Activated B cell treated with CpG ODN at 0.5 μM for 24 hours (primary cell): ENCODE measurements at regions of chr4 and their contacts with region 1.

Region 1: GRCh38 chr4:102843273-102843672 is 15.9 kb upstream of the UBE2D3 start:
- DNase-seq: no peak
- ATAC-seq: no peak
- H3K4me3 Mint-ChIP-seq: no peak overlapping the region
- H3K27ac Mint-ChIP-seq: no peak overlapping the region
- H3K4me1 Mint-ChIP-seq: peaks cover 2% of the 10 kb centered on the region
- H3K27me3 Mint-ChIP-seq: no peaks in the 10 kb centered on the region
- CTCF ChIP-seq: no peak

Region 2: DNA sequence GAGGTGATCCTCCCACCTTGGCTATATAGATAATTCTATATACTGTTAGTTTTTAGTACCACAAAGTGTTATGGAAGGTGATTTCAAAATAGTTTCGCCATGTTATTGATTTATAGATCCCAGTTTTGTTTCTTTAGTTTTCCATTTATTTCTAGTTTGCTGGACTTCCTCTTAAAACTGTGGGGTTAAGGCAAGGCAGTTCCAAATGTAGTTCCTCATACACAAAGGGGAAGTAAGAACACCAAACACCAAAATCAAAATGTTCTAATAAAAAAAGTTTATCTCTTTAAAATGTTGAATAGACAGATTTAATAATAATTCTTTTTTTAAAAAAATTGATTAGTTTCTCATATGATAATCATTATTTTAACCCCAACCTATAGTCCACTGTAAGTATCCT is 18.7 kb after region 1 on chr4:
- CTCF ChIA-PET with region 1: interaction called, 3 read pairs
- POLR2A ChIA-PET with region 1: interaction called, 9 read pairs
- intact Hi-C with region 1: loop called (anchors 2 kb)
- DNase-seq: no peak
- ATAC-seq: no peak
- H3K4me3 Mint-ChIP-seq: no peak overlapping the region
- H3K27ac Mint-ChIP-seq: no peak overlapping the region
- H3K4me1 Mint-ChIP-seq: peaks cover 25% of the 10 kb centered on the region
- H3K27me3 Mint-ChIP-seq: no peaks in the 10 kb centered on the region
- CTCF ChIP-seq: no peak

Region 3: GRCh38 chr4:102901804-102902203 is 58.5 kb after region 1 on chr4:
- CTCF ChIA-PET with region 1: no interaction called
- POLR2A ChIA-PET with region 1: no interaction called
- intact Hi-C with region 1: no loop called
- DNase-seq: no peak
- ATAC-seq: no peak
- H3K4me3 Mint-ChIP-seq: no peak overlapping the region
- H3K27ac Mint-ChIP-seq: no peak overlapping the region
- H3K4me1 Mint-ChIP-seq: no peaks in the 10 kb centered on the region
- H3K27me3 Mint-ChIP-seq: no peaks in the 10 kb centered on the region
- CTCF ChIP-seq: no peak

Region 4: GRCh38 chr4:102935716-102936115 is 92.4 kb after region 1 on chr4:
- CTCF ChIA-PET with region 1: no interaction called
- POLR2A ChIA-PET with region 1: no interaction called
- intact Hi-C with region 1: no loop called
- DNase-seq: no peak
- ATAC-seq: no peak
- H3K4me3 Mint-ChIP-seq: no peak overlapping the region
- H3K27ac Mint-ChIP-seq: no peak overlapping the region
- H3K4me1 Mint-ChIP-seq: no peaks in the 10 kb centered on the region
- H3K27me3 Mint-ChIP-seq: no peaks in the 10 kb centered on the region
- CTCF ChIP-seq: no peak

Region 5: GRCh38 chr4:103482893-103483292 is 639.6 kb after region 1 on chr4:
- CTCF ChIA-PET with region 1: no interaction called
- POLR2A ChIA-PET with region 1: no interaction called
- intact Hi-C with region 1: no loop called
- DNase-seq: no peak
- ATAC-seq: no peak
- H3K4me3 Mint-ChIP-seq: no peak overlapping the region
- H3K27ac Mint-ChIP-seq: no peak overlapping the region
- H3K4me1 Mint-ChIP-seq: no peaks in the 10 kb centered on the region
- H3K27me3 Mint-ChIP-seq: no peaks in the 10 kb centered on the region
- CTCF ChIP-seq: no peak